Endothelial cell of umbilical vein (primary cell): ENCODE measurements at regions of chr2 and their contacts with region 1.

Region 1: GRCh38 chr2:24084386-24085361 is at the start of gene TP53I3:
- DNase-seq: peak; percentile 93
- H3K4me3 ChIP-seq: peak within 1 kb of the TSS; percentile 53 to 85 (median 73)
- H3K27ac ChIP-seq: peak within 1 kb of the TSS; percentile 66
- H3K4me1 ChIP-seq: peaks cover 16% of the 10 kb centered on the region
- H3K27me3 ChIP-seq: no peaks in the 10 kb centered on the region
- CTCF ChIP-seq: peak; percentile 92 to 99
- POLR2A ChIP-seq: peak; percentile 96
- total RNA-seq, gene TP53I3: 94.2 and 102 TPM in 2 replicates

Region 2: DNA sequence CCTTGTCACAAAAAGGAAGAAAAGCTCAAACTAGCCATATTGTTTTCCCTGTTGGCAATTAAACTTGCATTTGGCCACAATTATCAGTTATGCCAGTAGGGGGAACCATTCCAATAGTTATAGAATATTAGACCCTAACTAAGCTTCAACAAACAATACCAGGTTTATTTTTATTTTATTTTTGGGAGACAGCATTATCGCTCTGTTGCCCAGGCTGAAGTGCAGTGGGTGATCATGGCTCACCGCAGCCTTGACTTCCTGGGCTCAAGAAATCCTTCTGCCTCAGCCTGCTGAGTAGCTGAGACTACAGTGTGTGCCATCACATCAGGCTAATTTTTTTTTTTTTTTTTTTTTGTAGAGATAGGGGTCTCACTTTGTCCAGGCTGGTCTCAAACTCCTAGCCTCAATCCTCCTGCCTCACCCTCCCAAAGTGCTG is 259.9 kb before region 1 on chr2:
- CTCF ChIA-PET with region 1: interaction called, 65 read pairs
- POLR2A ChIA-PET with region 1: interaction called, 3 read pairs
- dilution Hi-C with region 1: no loop called
- intact Hi-C with region 1: loop called (anchors 1 kb)
- DNase-seq: peak; percentile 78
- H3K4me3 ChIP-seq: no peak overlapping the region
- H3K27ac ChIP-seq: no peak overlapping the region
- H3K4me1 ChIP-seq: no peaks in the 10 kb centered on the region
- H3K27me3 ChIP-seq: no peaks in the 10 kb centered on the region
- CTCF ChIP-seq: peak; percentile 51 to 57
- POLR2A ChIP-seq: no peak

Region 3: DNA sequence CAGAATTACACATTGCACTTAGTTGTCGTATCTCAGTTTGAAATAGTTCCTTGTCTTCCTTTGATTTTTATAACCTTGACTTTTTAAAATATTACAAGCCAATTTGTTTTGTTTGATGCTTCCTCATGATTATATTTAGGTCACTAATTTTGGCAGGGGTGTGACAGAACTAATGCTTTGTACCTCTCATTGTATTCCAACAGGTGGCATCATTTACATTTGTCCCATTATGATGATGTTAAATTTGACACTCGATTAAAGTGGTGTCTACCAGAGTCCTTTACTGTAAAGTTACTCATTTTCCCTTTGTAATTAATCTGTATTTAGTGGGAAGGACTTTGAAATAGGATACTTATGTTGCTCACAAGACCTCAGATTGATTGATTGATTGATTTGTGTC is 96.3 kb before region 1 on chr2:
- CTCF ChIA-PET with region 1: interaction called, 6 read pairs
- POLR2A ChIA-PET with region 1: no interaction called
- dilution Hi-C with region 1: no loop called
- intact Hi-C with region 1: loop called (anchors 1 kb)
- DNase-seq: peak; percentile 35
- H3K4me3 ChIP-seq: no peak overlapping the region
- H3K27ac ChIP-seq: no peak overlapping the region
- H3K4me1 ChIP-seq: no peaks in the 10 kb centered on the region
- H3K27me3 ChIP-seq: no peaks in the 10 kb centered on the region
- CTCF ChIP-seq: peak; percentile 10 to 13
- POLR2A ChIP-seq: no peak

Region 4: GRCh38 chr2:24123195-24123921 is 38.7 kb after region 1 on chr2 and contains the starts of genes FAM228B and PFN4:
- CTCF ChIA-PET with region 1: interaction called, 43 read pairs
- POLR2A ChIA-PET with region 1: no interaction called
- dilution Hi-C with region 1: no loop called
- intact Hi-C with region 1: loop called (anchors 1 kb)
- DNase-seq: peak; percentile 85
- H3K4me3 ChIP-seq: peak within 1 kb of the TSS; percentile 51 to 94 (median 73)
- H3K27ac ChIP-seq: peak within 1 kb of the TSS; percentile 77
- H3K4me1 ChIP-seq: peaks cover 22% of the 10 kb centered on the region
- H3K27me3 ChIP-seq: no peaks in the 10 kb centered on the region
- CTCF ChIP-seq: no peak
- POLR2A ChIP-seq: peak; percentile 84
- total RNA-seq, gene FAM228B: 8.3 and 11.9 TPM in 2 replicates
- total RNA-seq, gene PFN4: 0.93 TPM in 1 of 2 replicates, not detected in the other

Region 5: GRCh38 chr2:24304098-24304497 is 219.4 kb after region 1 on chr2:
- CTCF ChIA-PET with region 1: no interaction called
- POLR2A ChIA-PET with region 1: no interaction called
- dilution Hi-C with region 1: no loop called
- intact Hi-C with region 1: no loop called
- DNase-seq: peak; percentile 50
- H3K4me3 ChIP-seq: no peak overlapping the region
- H3K27ac ChIP-seq: no peak overlapping the region
- H3K4me1 ChIP-seq: no peaks in the 10 kb centered on the region
- H3K27me3 ChIP-seq: no peaks in the 10 kb centered on the region
- CTCF ChIP-seq: no peak
- POLR2A ChIP-seq: no peak

Region 6: DNA sequence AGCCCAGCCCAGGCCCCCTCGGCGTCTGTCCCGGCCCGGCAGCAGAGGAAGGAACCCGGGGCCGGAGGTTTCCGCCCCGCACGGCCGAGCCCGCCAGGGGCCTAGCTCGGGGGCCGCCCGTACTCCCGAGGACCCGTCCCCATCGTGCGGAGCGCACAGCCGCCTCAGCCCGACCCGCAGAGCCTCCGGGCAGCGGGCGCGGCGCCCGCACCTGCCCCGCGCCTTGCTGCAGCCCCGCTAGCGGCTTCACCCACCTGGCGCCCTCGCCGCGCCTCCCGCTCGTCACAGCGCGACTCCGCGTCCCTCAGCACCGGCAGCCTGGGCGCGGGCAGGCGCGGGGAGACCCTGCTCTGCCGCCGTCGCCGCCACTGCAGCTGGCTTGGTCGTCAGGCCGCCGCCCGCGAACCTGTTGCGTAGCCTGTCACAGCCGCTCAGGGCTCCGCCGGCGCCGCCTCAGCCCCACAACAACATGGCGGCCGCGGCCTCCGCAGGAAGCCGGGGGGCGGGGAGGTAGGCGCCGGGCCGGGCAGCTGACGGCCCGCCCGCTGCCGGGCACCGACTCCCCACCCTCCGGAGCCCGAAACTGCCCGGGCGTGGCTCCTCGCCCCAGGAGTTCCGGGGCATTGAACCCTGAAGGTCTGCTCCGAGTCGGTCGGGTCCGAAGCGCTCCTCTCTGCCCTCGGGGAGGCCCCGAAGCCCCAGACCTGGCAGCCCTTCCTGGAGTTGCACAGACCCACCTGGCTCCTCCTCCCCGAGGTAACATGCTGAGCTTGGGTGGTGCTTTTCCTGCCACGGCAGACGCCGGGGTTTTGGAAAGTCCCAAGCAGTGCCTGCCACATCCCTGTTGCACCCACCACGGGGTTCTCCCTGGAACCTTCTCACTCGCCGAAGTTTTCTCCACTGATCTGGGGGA is 275.6 kb after region 1 on chr2 and contains the start of gene ITSN2:
- CTCF ChIA-PET with region 1: interaction called, 3 read pairs
- POLR2A ChIA-PET with region 1: no interaction called
- dilution Hi-C with region 1: no loop called
- intact Hi-C with region 1: loop called (anchors 5 kb)
- DNase-seq: peak; percentile 78
- H3K4me3 ChIP-seq: peak within 1 kb of the TSS; percentile 81 to 97 (median 90)
- H3K27ac ChIP-seq: peak within 1 kb of the TSS; percentile 79
- H3K4me1 ChIP-seq: peaks cover 24% of the 10 kb centered on the region
- H3K27me3 ChIP-seq: no peaks in the 10 kb centered on the region
- CTCF ChIP-seq: no peak
- POLR2A ChIP-seq: peak; percentile 86
- total RNA-seq, gene ITSN2: 56.8 and 60.1 TPM in 2 replicates